B cell (primary cell): ENCODE measurements at regions of chr9 and their contacts with region 1.

Region 1: GRCh38 chr9:126490871-126491567 is 122.7 kb upstream of the LMX1B start:
- DNase-seq: peak; percentile 79
- ATAC-seq: peak; percentile 77
- H3K4me3 ChIP-seq: no peak overlapping the region
- H3K4me3 Mint-ChIP-seq: no peak overlapping the region
- H3K27ac ChIP-seq: no peak overlapping the region
- H3K27ac Mint-ChIP-seq: no peak overlapping the region
- H3K4me1 ChIP-seq: peaks cover 11 to 14% of the 10 kb centered on the region in 2 donors
- H3K4me1 Mint-ChIP-seq: peaks cover 2% of the 10 kb centered on the region
- H3K27me3 ChIP-seq: peaks cover 0 to 7% (median 2%) of the 10 kb centered on the region in 4 experiments
- H3K27me3 Mint-ChIP-seq: peaks cover 3% of the 10 kb centered on the region
- CTCF ChIP-seq: peak; percentile 99

Region 2: DNA sequence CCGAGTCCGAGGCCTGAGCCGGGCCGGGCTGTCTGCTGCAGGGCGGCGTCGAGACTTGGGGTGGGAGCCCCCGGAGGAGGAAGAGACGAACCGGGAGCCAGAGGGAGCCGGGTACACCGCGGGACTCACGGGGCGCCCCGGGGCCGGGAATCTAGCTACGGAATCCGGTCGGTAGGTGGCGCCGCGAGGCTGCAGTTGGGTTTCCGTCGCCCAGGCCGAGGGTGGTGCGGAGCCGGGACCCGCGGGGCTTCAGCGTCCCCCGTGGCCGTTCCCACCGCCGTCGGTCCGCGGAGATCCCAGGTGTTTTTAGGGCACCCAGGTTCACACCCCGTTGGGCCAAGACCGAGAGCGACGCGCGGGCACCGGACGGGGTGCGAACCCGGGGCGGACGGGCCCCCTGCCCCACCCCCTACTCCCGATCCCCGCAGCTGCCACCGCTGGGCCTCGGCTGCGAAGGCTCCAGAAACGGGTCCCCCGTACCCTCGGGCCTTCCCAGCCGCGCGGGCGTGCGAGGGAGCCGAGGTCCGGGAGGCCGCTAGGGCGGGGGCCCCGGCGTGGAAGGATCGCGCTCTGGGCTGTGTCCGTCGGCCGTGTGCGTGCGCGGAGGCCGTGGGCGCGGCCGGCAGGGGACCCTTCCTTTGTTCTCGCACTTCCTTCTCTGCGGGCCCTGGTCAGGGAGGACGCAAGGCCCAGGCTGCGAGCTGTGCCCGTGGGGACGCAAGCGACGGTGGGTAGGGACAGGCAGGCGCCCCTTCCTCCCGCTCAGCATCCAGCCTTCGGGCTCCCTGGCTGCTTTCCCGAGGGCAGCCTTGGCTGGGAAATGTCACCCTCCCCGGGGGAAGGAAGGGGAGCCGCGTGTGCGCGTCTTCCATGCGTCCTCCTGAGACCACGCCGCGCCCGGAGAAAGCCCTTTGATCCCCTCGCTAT is 1082.8 kb before region 1 on chr9:
- CTCF ChIA-PET with region 1: interaction called, 27 read pairs
- POLR2A ChIA-PET with region 1: no interaction called
- intact Hi-C with region 1: loop called (anchors 1 kb)
- DNase-seq: peak; percentile 87
- ATAC-seq: peak; percentile 81
- H3K4me3 ChIP-seq: peak overlapping the region; percentile 5 to 68 (median 51)
- H3K4me3 Mint-ChIP-seq: peak overlapping the region; percentile 80
- H3K27ac ChIP-seq: peak overlapping the region in 1 of 2 donors; percentile 15
- H3K27ac Mint-ChIP-seq: no peak overlapping the region
- H3K4me1 ChIP-seq: peaks cover 10 to 19% of the 10 kb centered on the region in 2 donors
- H3K4me1 Mint-ChIP-seq: peaks cover 16% of the 10 kb centered on the region
- H3K27me3 ChIP-seq: peaks cover 0 to 33% (median 9%) of the 10 kb centered on the region in 4 experiments
- H3K27me3 Mint-ChIP-seq: peaks cover 23% of the 10 kb centered on the region
- CTCF ChIP-seq: peak; percentile 93

Region 3: GRCh38 chr9:126146254-126147145 is 344.5 kb before region 1 on chr9:
- CTCF ChIA-PET with region 1: interaction called, 11 read pairs
- POLR2A ChIA-PET with region 1: no interaction called
- intact Hi-C with region 1: no loop called
- DNase-seq: peak; percentile 44
- ATAC-seq: peak; percentile 64
- H3K4me3 ChIP-seq: no peak overlapping the region
- H3K4me3 Mint-ChIP-seq: peak overlapping the region; percentile 44
- H3K27ac ChIP-seq: no peak overlapping the region
- H3K27ac Mint-ChIP-seq: peak overlapping the region; percentile 44
- H3K4me1 ChIP-seq: peaks cover 0 to 7% of the 10 kb centered on the region in 2 donors
- H3K4me1 Mint-ChIP-seq: peaks cover 10% of the 10 kb centered on the region
- H3K27me3 ChIP-seq: peaks cover 0 to 14% (median 7%) of the 10 kb centered on the region in 4 experiments
- H3K27me3 Mint-ChIP-seq: peaks cover 25% of the 10 kb centered on the region
- CTCF ChIP-seq: peak; percentile 51

Region 4: DNA sequence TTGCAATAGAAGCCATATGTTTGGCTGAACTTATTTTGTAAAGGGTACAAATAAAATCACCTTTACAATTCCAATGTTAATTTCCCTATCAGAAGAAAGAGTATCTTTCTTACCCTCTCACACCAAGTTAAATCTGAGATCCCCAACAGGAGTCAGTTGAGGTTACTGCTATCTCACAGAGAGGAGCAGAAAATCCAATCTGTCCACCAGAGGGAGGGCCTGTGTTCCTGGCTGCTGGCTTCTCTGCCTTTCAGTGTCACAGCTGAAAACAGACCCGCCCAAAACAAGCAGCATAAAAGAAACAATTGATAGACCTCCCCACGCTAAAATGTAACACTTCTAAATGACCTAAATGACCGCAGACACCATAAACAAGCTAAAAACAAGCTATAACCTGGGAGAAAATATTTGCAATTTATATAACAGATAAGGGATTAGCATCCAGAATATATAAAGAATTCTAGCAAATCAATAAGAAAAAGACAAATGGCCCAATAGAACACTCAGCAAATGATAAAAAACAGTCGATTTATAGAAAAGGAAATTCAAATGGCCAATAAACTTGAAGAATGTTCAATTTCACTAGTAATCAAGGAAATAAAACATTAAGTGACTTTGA is 188.9 kb before region 1 on chr9:
- CTCF ChIA-PET with region 1: interaction called, 72 read pairs
- POLR2A ChIA-PET with region 1: no interaction called
- intact Hi-C with region 1: loop called (anchors 1 kb)
- DNase-seq: peak; percentile 66
- ATAC-seq: peak; percentile 69
- H3K4me3 ChIP-seq: no peak overlapping the region
- H3K4me3 Mint-ChIP-seq: no peak overlapping the region
- H3K27ac ChIP-seq: no peak overlapping the region
- H3K27ac Mint-ChIP-seq: no peak overlapping the region
- H3K4me1 ChIP-seq: no peaks in the 10 kb centered on the region
- H3K4me1 Mint-ChIP-seq: no peaks in the 10 kb centered on the region
- H3K27me3 ChIP-seq: peaks cover 0 to 5% (median 0%) of the 10 kb centered on the region in 4 experiments
- H3K27me3 Mint-ChIP-seq: peaks cover 11% of the 10 kb centered on the region
- CTCF ChIP-seq: peak; percentile 62

Region 5: GRCh38 chr9:126326228-126327005 is 164.6 kb before region 1 on chr9 and contains the start of gene MVB12B:
- CTCF ChIA-PET with region 1: interaction called, 85 read pairs
- POLR2A ChIA-PET with region 1: no interaction called
- intact Hi-C with region 1: no loop called
- DNase-seq: peak; percentile 76
- ATAC-seq: peak; percentile 88
- H3K4me3 ChIP-seq: peak within 1 kb of the TSS in 4 of 5 experiments; percentile 37 to 56 (median 50)
- H3K4me3 Mint-ChIP-seq: peak within 1 kb of the TSS; percentile 86
- H3K27ac ChIP-seq: no peak within 1 kb of the TSS
- H3K27ac Mint-ChIP-seq: peak within 1 kb of the TSS; percentile 79
- H3K4me1 ChIP-seq: peaks cover 10 to 14% of the 10 kb centered on the region in 2 donors
- H3K4me1 Mint-ChIP-seq: peaks cover 18% of the 10 kb centered on the region
- H3K27me3 ChIP-seq: peaks cover 0 to 10% (median 0%) of the 10 kb centered on the region in 4 experiments
- H3K27me3 Mint-ChIP-seq: peaks cover 21% of the 10 kb centered on the region
- CTCF ChIP-seq: no peak
- total RNA-seq, gene MVB12B: 9.0 and 9.8 TPM in 2 replicates

Region 6: GRCh38 chr9:126449725-126450667 is 41.0 kb before region 1 on chr9:
- CTCF ChIA-PET with region 1: interaction called, 10 read pairs
- POLR2A ChIA-PET with region 1: no interaction called
- intact Hi-C with region 1: no loop called
- DNase-seq: no peak
- ATAC-seq: no peak
- H3K4me3 ChIP-seq: no peak overlapping the region
- H3K4me3 Mint-ChIP-seq: no peak overlapping the region
- H3K27ac ChIP-seq: no peak overlapping the region
- H3K27ac Mint-ChIP-seq: peak overlapping the region; percentile 15
- H3K4me1 ChIP-seq: no peaks in the 10 kb centered on the region
- H3K4me1 Mint-ChIP-seq: no peaks in the 10 kb centered on the region
- H3K27me3 ChIP-seq: no peaks in the 10 kb centered on the region
- H3K27me3 Mint-ChIP-seq: no peaks in the 10 kb centered on the region
- CTCF ChIP-seq: no peak